HEK293 (cell line): ENCODE measurements at regions of chr1 and their contacts with region 1.

Region 1: GRCh38 chr1:234309598-234310459 is 63.4 kb upstream of the COA6 start:
- H3K4me3 ChIP-seq: no peak overlapping the region
- H3K27ac ChIP-seq: no peak overlapping the region
- H3K4me1 ChIP-seq: no peaks in the 10 kb centered on the region
- CTCF ChIP-seq: peak; percentile 86

Region 2: GRCh38 chr1:234114648-234115307 is 195.1 kb before region 1 on chr1:
- CTCF ChIA-PET with region 1: interaction called, 86 read pairs
- POLR2A ChIA-PET with region 1: no interaction called
- H3K4me3 ChIP-seq: no peak overlapping the region
- H3K27ac ChIP-seq: no peak overlapping the region
- H3K4me1 ChIP-seq: no peaks in the 10 kb centered on the region
- CTCF ChIP-seq: peak; percentile 80

Region 3: DNA sequence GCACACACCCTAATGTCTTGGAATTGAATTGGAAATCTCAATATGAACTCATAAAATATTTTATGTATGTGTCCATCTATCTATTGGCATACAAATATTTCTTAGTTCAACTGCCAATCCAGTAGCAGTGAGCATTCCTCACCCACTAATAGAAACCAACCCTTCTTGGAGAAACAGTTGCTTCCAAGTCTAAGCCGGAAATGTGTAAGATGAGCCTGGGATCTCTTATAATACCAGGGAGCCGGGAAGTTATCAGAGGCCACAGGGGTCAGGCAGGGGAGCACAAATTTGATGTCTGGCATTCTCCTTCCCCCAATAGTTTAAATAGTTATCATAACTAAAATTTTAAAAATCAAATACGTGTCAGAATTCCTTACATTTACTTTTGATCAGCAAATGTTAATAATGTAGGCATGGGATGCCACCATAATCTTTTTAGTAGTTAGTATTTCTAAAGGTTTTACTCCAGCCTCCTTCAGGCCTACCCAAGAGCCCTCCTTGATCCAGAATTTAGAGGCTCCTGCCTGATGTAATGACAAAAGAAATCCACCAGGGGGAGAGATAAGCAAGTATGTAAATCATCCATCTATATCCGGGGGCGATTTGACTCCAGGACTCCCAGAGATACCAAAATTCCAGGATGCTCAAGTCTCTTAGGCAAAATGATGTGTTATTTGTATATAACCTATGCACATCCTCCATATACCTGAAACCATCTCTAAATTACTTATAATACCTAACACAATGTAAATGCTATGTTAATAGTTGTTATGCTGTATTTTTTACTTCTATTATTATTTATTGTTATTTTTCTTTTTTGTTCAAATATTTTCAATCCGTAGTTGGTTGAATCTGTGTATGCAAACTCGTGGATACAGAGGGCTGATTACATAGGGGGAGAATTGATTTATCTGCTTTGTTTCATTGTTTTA is 155.2 kb before region 1 on chr1:
- CTCF ChIA-PET with region 1: interaction called, 14 read pairs
- POLR2A ChIA-PET with region 1: no interaction called
- H3K4me3 ChIP-seq: no peak overlapping the region
- H3K27ac ChIP-seq: no peak overlapping the region
- H3K4me1 ChIP-seq: no peaks in the 10 kb centered on the region
- CTCF ChIP-seq: no peak

Region 4: GRCh38 chr1:234212764-234213657 is 96.8 kb before region 1 on chr1:
- CTCF ChIA-PET with region 1: interaction called, 76 read pairs
- POLR2A ChIA-PET with region 1: no interaction called
- H3K4me3 ChIP-seq: no peak overlapping the region
- H3K27ac ChIP-seq: no peak overlapping the region
- H3K4me1 ChIP-seq: no peaks in the 10 kb centered on the region
- CTCF ChIP-seq: peak; percentile 50

Region 5: DNA sequence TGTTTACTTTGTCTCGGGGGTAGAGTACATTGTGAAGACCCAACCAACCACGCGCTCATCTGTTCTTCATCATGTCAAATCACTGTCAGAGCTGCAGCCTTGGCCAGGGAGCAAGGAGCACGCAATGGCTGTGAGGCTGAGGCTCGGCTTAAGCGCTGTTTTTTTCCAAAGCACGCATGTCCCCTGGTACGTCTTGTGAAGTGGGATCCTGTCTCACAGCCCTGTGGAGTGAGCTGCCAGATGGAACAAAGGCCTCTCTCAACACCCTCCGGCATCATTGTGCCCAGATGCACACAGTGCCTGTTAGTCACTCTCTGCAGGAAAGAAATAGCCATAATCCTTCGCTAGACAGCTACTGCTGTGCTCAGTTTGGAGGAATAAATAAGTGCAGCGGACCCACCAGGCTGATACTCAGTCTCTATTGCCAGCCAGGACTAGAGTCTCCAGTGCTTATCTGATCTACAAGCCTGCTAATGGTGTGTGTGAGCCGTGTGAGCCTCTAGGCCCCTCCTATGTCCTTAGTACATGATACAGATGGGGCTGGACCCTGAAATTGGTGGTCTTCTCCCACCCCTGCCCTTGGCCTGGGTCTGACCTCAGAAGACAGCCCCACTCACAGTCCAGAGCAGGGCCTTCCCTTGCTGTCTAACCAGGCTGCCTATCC is 27.9 kb before region 1 on chr1:
- CTCF ChIA-PET with region 1: interaction called, 13 read pairs
- POLR2A ChIA-PET with region 1: no interaction called
- H3K4me3 ChIP-seq: no peak overlapping the region
- H3K27ac ChIP-seq: no peak overlapping the region
- H3K4me1 ChIP-seq: no peaks in the 10 kb centered on the region
- CTCF ChIP-seq: no peak

Region 6: GRCh38 chr1:234342774-234343173 is 32.9 kb after region 1 on chr1:
- CTCF ChIA-PET with region 1: interaction called, 10 read pairs
- POLR2A ChIA-PET with region 1: no interaction called
- H3K4me3 ChIP-seq: no peak overlapping the region
- H3K27ac ChIP-seq: no peak overlapping the region
- H3K4me1 ChIP-seq: no peaks in the 10 kb centered on the region
- CTCF ChIP-seq: no peak